K562 (cell line): ENCODE measurements at regions of chr3 and their contacts with region 1.

Region 1: GRCh38 chr3:5426094-5426883 is 238.8 kb downstream of the EDEM1 start:
- DNase-seq: peak; percentile 77 to 96 (median 85)
- ATAC-seq: peak; percentile 80
- H3K4me3 ChIP-seq: no peak overlapping the region
- H3K27ac ChIP-seq: no peak overlapping the region; the same call in 2 of the 3 replicates
- H3K4me1 ChIP-seq: peaks cover 19 to 48% of the 10 kb centered on the region in 2 experiments
- H3K27me3 ChIP-seq: no peaks in the 10 kb centered on the region
- CTCF ChIP-seq: peak; percentile 89 to 99 (median 97)
- EP300 ChIP-seq: peak; percentile 51
- POLR2A ChIP-seq: no peak
- RAD21 ChIP-seq: peak; percentile 98

Region 2: GRCh38 chr3:5057857-5058324 is 368.4 kb before region 1 on chr3:
- CTCF ChIA-PET with region 1: no interaction called
- POLR2A ChIA-PET with region 1: no interaction called
- in situ Hi-C with region 1: no loop called
- intact Hi-C with region 1: no loop called
- DNase-seq: peak; percentile 73 to 93 (median 76)
- ATAC-seq: peak; percentile 96
- H3K4me3 ChIP-seq: no peak overlapping the region
- H3K27ac ChIP-seq: no peak overlapping the region
- H3K4me1 ChIP-seq: peaks cover 5 to 36% of the 10 kb centered on the region in 2 experiments; a peak in 4 of 5 replicates
- H3K27me3 ChIP-seq: no peaks in the 10 kb centered on the region
- CTCF ChIP-seq: peak; percentile 88 to 94 (median 91)
- EP300 ChIP-seq: peak; percentile 44; the same call in 1 of the 2 replicates
- POLR2A ChIP-seq: no peak
- RAD21 ChIP-seq: peak; percentile 99

Region 3: DNA sequence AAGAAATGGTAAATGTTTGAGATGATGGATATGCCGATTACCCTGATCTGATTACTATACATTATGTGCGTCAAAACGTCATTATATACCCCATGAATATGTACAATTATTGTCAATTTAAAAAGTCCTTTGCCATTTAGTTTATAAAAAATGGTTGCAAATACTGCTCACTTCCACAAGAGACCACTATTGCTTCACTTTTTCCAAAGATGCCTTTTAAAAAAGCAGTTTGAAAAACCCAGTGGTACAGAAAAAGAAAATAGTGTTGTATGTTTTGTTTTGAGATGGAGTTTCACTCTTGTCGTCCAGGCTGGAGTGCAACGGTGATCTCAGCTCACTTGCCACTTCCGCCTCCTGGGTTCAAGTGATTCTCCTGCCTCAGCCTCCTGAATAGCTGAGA is 199.5 kb before region 1 on chr3:
- CTCF ChIA-PET with region 1: no interaction called
- POLR2A ChIA-PET with region 1: no interaction called
- in situ Hi-C with region 1: no loop called
- intact Hi-C with region 1: loop called (anchors 10 kb)
- DNase-seq: peak in 2 of 4 experiments; percentile 39 to 41
- ATAC-seq: peak; percentile 46; the same call in 2 of the 3 replicates
- H3K4me3 ChIP-seq: no peak overlapping the region
- H3K27ac ChIP-seq: no peak overlapping the region
- H3K4me1 ChIP-seq: peaks cover 0 to 3% of the 10 kb centered on the region in 2 experiments; a peak in 2 of 5 replicates
- H3K27me3 ChIP-seq: peaks cover 29 to 47% of the 10 kb centered on the region in 2 experiments; a peak in 3 of 5 replicates
- CTCF ChIP-seq: peak; percentile 40 to 87 (median 56); a peak in 5 of 6 replicates
- EP300 ChIP-seq: no peak
- POLR2A ChIP-seq: no peak
- RAD21 ChIP-seq: peak; percentile 76 to 89

Region 4: GRCh38 chr3:5494905-5495519 is 68.7 kb after region 1 on chr3:
- CTCF ChIA-PET with region 1: no interaction called
- POLR2A ChIA-PET with region 1: no interaction called
- in situ Hi-C with region 1: no loop called
- intact Hi-C with region 1: loop called (anchors 2 kb)
- DNase-seq: peak in 3 of 4 experiments; percentile 22 to 63 (median 24)
- ATAC-seq: peak; percentile 72
- H3K4me3 ChIP-seq: no peak overlapping the region
- H3K27ac ChIP-seq: no peak overlapping the region
- H3K4me1 ChIP-seq: peaks cover 0 to 33% of the 10 kb centered on the region in 2 experiments; a peak in 4 of 5 replicates
- H3K27me3 ChIP-seq: no peaks in the 10 kb centered on the region
- CTCF ChIP-seq: no peak
- EP300 ChIP-seq: 0 out of 2 replicates have a peak, but pooled peaks have one; percentile 12
- POLR2A ChIP-seq: no peak
- RAD21 ChIP-seq: no peak

Region 5: GRCh38 chr3:5607581-5607980 is 181.3 kb after region 1 on chr3:
- CTCF ChIA-PET with region 1: no interaction called
- POLR2A ChIA-PET with region 1: interaction called, 3 read pairs
- in situ Hi-C with region 1: no loop called
- intact Hi-C with region 1: loop called (anchors 2 kb)
- DNase-seq: no peak
- ATAC-seq: peak; percentile 58
- H3K4me3 ChIP-seq: no peak overlapping the region
- H3K27ac ChIP-seq: no peak overlapping the region
- H3K4me1 ChIP-seq: no peaks in the 10 kb centered on the region
- H3K27me3 ChIP-seq: no peaks in the 10 kb centered on the region
- CTCF ChIP-seq: 0 out of 6 replicates have a peak, but pooled peaks of 1 of the 3 experiments have one; percentile 12
- EP300 ChIP-seq: no peak
- POLR2A ChIP-seq: no peak
- RAD21 ChIP-seq: peak in 1 of 2 experiments; percentile 34; a peak in 1 of 4 replicates

Region 6: GRCh38 chr3:5699313-5699712 is 273.0 kb after region 1 on chr3:
- CTCF ChIA-PET with region 1: no interaction called
- POLR2A ChIA-PET with region 1: no interaction called
- in situ Hi-C with region 1: no loop called
- intact Hi-C with region 1: no loop called
- DNase-seq: no peak
- ATAC-seq: no peak
- H3K4me3 ChIP-seq: no peak overlapping the region
- H3K27ac ChIP-seq: no peak overlapping the region
- H3K4me1 ChIP-seq: no peaks in the 10 kb centered on the region
- H3K27me3 ChIP-seq: no peaks in the 10 kb centered on the region
- CTCF ChIP-seq: no peak
- EP300 ChIP-seq: no peak
- POLR2A ChIP-seq: no peak
- RAD21 ChIP-seq: no peak

Region 7: GRCh38 chr3:5774337-5774736 is 348.0 kb after region 1 on chr3:
- CTCF ChIA-PET with region 1: no interaction called
- POLR2A ChIA-PET with region 1: interaction called, 4 read pairs
- in situ Hi-C with region 1: no loop called
- intact Hi-C with region 1: loop called (anchors 2 kb)
- DNase-seq: peak in 2 of 4 experiments; percentile 78 to 89
- ATAC-seq: peak; percentile 89
- H3K4me3 ChIP-seq: no peak overlapping the region
- H3K27ac ChIP-seq: peak overlapping the region; percentile 77
- H3K4me1 ChIP-seq: peaks cover 3 to 4% of the 10 kb centered on the region in 2 experiments; a peak in 3 of 5 replicates
- H3K27me3 ChIP-seq: no peaks in the 10 kb centered on the region
- CTCF ChIP-seq: no peak
- EP300 ChIP-seq: peak; percentile 81; the same call in 1 of the 2 replicates
- POLR2A ChIP-seq: no peak
- RAD21 ChIP-seq: peak in 1 of 2 experiments; percentile 11; a peak in 1 of 4 replicates

Region 8: GRCh38 chr3:6799264-6799915 is 1373.1 kb after region 1 on chr3:
- CTCF ChIA-PET with region 1: interaction called, 3 read pairs
- POLR2A ChIA-PET with region 1: no interaction called
- in situ Hi-C with region 1: no loop called
- intact Hi-C with region 1: loop called (anchors 2 kb)
- DNase-seq: peak; percentile 57 to 75 (median 62)
- ATAC-seq: peak; percentile 97
- H3K4me3 ChIP-seq: no peak overlapping the region
- H3K27ac ChIP-seq: no peak overlapping the region
- H3K4me1 ChIP-seq: no peaks in the 10 kb centered on the region
- H3K27me3 ChIP-seq: no peaks in the 10 kb centered on the region
- CTCF ChIP-seq: peak; percentile 69 to 90 (median 84)
- EP300 ChIP-seq: no peak
- POLR2A ChIP-seq: no peak
- RAD21 ChIP-seq: peak; percentile 68 to 84